Activated CD4-positive, alpha-beta memory T cell treated with anti-CD3 and anti-CD28 coated beads for 36 hours (primary cell): ENCODE measurements at regions of chr6 and their contacts with region 1.

Region 1: GRCh38 chr6:52361945-52362442 is at the start of gene PAQR8:
- DNase-seq: peak; percentile 85
- H3K4me3 Mint-ChIP-seq: peak within 1 kb of the TSS; percentile 99
- H3K27ac Mint-ChIP-seq: peak within 1 kb of the TSS; percentile 92
- H3K4me1 Mint-ChIP-seq: peaks cover 33% of the 10 kb centered on the region
- H3K27me3 Mint-ChIP-seq: no peaks in the 10 kb centered on the region
- total RNA-seq, gene PAQR8: 11.2 to 12.2 TPM

Region 2: GRCh38 chr6:52297433-52297832 is 64.6 kb before region 1 on chr6:
- CTCF ChIA-PET with region 1: interaction called, 3 read pairs
- POLR2A ChIA-PET with region 1: no interaction called
- intact Hi-C with region 1: loop called (anchors 2 kb)
- DNase-seq: peak; percentile 23
- H3K4me3 Mint-ChIP-seq: peak overlapping the region; percentile 64
- H3K27ac Mint-ChIP-seq: peak overlapping the region; percentile 88
- H3K4me1 Mint-ChIP-seq: peaks cover 41% of the 10 kb centered on the region
- H3K27me3 Mint-ChIP-seq: no peaks in the 10 kb centered on the region

Region 3: DNA sequence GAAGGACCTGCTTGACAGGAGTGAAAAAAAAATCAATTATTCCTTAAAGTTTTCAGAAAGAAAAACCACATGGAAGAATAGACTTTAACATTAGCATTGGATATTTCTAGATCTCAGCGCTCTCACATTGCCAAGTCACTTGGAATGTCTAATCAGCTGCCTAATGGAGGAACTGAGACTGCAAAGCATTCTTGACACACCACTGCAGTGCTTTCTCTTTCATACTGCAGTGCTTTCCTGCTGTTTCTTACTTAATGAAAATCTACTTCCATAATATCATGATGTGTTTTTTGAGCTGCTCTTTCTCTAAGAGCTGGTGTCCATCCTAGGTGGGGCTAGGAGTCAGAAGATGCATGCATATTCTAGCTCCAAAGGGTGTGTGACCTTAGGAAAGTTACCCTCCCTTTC is 57.0 kb before region 1 on chr6:
- CTCF ChIA-PET with region 1: interaction called, 5 read pairs
- POLR2A ChIA-PET with region 1: interaction called, 5 read pairs
- intact Hi-C with region 1: loop called (anchors 1 kb)
- DNase-seq: no peak
- H3K4me3 Mint-ChIP-seq: peak overlapping the region; percentile 28
- H3K27ac Mint-ChIP-seq: peak overlapping the region; percentile 74
- H3K4me1 Mint-ChIP-seq: peaks cover 71% of the 10 kb centered on the region
- H3K27me3 Mint-ChIP-seq: no peaks in the 10 kb centered on the region

Region 4: GRCh38 chr6:52377538-52378221 is 15.7 kb after region 1 on chr6:
- CTCF ChIA-PET with region 1: interaction called, 4 read pairs
- POLR2A ChIA-PET with region 1: interaction called, 6 read pairs
- intact Hi-C with region 1: loop called (anchors 1 kb)
- DNase-seq: no peak
- H3K4me3 Mint-ChIP-seq: no peak overlapping the region
- H3K27ac Mint-ChIP-seq: no peak overlapping the region
- H3K4me1 Mint-ChIP-seq: peaks cover 61% of the 10 kb centered on the region
- H3K27me3 Mint-ChIP-seq: no peaks in the 10 kb centered on the region

Region 5: GRCh38 chr6:52399511-52400312 is 37.7 kb after region 1 on chr6:
- CTCF ChIA-PET with region 1: interaction called, 52 read pairs
- POLR2A ChIA-PET with region 1: interaction called, 11 read pairs
- intact Hi-C with region 1: loop called (anchors 1 kb)
- DNase-seq: peak; percentile 39
- H3K4me3 Mint-ChIP-seq: no peak overlapping the region
- H3K27ac Mint-ChIP-seq: peak overlapping the region; percentile 40
- H3K4me1 Mint-ChIP-seq: peaks cover 63% of the 10 kb centered on the region
- H3K27me3 Mint-ChIP-seq: no peaks in the 10 kb centered on the region